ENCODE measurements at regions of chr7 and their contacts with region 1.

Region 1: GRCh38 chr7:77819021-77819420 is 20.4 kb downstream of the PHTF2 start:
- H3K4me3 Mint-ChIP-seq: no peak overlapping the region
- H3K27ac Mint-ChIP-seq: no peak overlapping the region
- H3K4me1 Mint-ChIP-seq: peaks cover 30% of the 10 kb centered on the region
- H3K27me3 Mint-ChIP-seq: no peaks in the 10 kb centered on the region

Region 2: DNA sequence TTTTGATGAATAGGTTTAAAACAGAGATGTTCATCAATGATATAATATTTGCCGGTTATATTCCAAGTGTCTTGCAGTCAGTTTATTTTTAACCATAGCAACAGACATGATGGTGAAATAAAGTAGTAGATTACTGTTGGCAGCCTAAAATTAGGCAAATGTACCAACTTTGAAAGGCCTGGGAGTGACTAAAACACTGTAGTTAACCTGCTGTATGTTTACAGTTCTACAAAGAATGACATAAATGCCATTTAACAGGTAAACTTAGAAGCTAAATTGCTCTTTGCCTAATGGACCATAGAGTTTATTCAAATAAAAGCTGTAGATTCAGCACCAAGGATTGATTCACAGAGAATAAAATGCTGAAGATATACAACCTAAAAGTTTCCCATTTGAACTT is 43.7 kb after region 1 on chr7:
- intact Hi-C with region 1: loop called (anchors 5 kb)
- H3K4me3 Mint-ChIP-seq: no peak overlapping the region
- H3K27ac Mint-ChIP-seq: no peak overlapping the region
- H3K4me1 Mint-ChIP-seq: peaks cover 16% of the 10 kb centered on the region
- H3K27me3 Mint-ChIP-seq: no peaks in the 10 kb centered on the region

Measured in dendritic cell treated with granulocyte-macrophage colony-stimulating factor and Interleukin-4, amounts not matched to agents 40 ng/mL and 50 ng/mL, for 4 days (primary cell).